ENCODE measurements at regions of chr10 and their contacts with region 1.

Region 1: GRCh38 chr10:72337020-72337629 is 17.6 kb downstream of the DNAJB12 start:
- DNase-seq: peak; percentile 71
- H3K4me3 Mint-ChIP-seq: no peak overlapping the region
- H3K27ac Mint-ChIP-seq: peak overlapping the region; percentile 64
- H3K4me1 Mint-ChIP-seq: peaks cover 66% of the 10 kb centered on the region
- H3K27me3 Mint-ChIP-seq: no peaks in the 10 kb centered on the region

Region 2: DNA sequence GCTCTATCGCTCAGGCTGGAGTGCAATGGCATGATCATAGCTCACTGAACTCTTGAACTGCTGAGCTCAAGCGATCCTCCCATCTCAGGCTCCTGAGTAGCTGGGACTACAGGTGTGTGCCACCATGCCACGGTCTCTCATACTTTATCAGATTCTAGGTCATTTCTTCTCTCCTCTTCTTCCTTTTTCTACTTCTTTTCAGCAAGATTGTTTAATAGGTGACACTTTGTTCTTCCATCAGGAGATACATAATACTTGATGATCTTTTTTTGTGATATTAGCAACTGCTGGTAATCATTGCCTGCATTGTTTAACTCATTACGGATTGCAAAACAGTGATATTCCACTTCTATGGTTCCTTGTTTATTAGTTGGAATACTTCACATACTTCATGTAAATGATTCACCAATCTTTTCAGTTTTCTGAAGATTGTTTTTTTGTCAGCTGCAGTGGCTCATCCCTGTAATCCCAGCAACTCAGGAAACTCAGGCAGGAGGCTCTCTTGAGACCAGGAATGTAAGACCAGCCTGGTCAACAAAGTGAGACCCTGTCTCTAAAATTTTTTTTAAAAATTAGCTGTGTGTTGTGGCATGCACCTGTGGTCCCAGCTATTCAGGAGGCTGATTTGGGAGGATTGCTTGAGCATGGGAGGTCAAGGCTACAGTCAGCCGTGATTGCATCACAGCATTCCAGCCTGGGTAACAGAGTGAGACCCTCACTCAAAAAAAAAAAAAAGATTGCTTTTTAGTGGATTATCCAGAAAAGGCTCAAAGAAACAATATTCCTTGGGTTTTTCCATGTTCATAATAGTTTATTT is 409.1 kb before region 1 on chr10:
- CTCF ChIA-PET with region 1: no interaction called
- POLR2A ChIA-PET with region 1: no interaction called
- DNase-seq: no peak
- H3K4me3 Mint-ChIP-seq: no peak overlapping the region
- H3K27ac Mint-ChIP-seq: no peak overlapping the region
- H3K4me1 Mint-ChIP-seq: no peaks in the 10 kb centered on the region
- H3K27me3 Mint-ChIP-seq: peaks cover 11% of the 10 kb centered on the region

Region 3: GRCh38 chr10:72088889-72089575 is 248.1 kb before region 1 on chr10:
- CTCF ChIA-PET with region 1: interaction called, 17 read pairs
- POLR2A ChIA-PET with region 1: interaction called, 46 read pairs
- DNase-seq: peak; percentile 68
- H3K4me3 Mint-ChIP-seq: peak overlapping the region; percentile 100
- H3K27ac Mint-ChIP-seq: peak overlapping the region; percentile 100
- H3K4me1 Mint-ChIP-seq: peaks cover 54% of the 10 kb centered on the region
- H3K27me3 Mint-ChIP-seq: no peaks in the 10 kb centered on the region

Region 4: GRCh38 chr10:72215652-72216549 is 121.2 kb before region 1 on chr10 and contains the starts of genes ANAPC16 and ASCC1:
- CTCF ChIA-PET with region 1: interaction called, 36 read pairs
- POLR2A ChIA-PET with region 1: interaction called, 29 read pairs
- DNase-seq: peak; percentile 94
- H3K4me3 Mint-ChIP-seq: peak within 1 kb of the TSS; percentile 98
- H3K27ac Mint-ChIP-seq: peak within 1 kb of the TSS; percentile 99
- H3K4me1 Mint-ChIP-seq: peaks cover 61% of the 10 kb centered on the region
- H3K27me3 Mint-ChIP-seq: no peaks in the 10 kb centered on the region
- total RNA-seq, gene ANAPC16: 94.2 to 101 TPM
- total RNA-seq, gene ASCC1: 35.5 to 36.2 TPM

Region 5: DNA sequence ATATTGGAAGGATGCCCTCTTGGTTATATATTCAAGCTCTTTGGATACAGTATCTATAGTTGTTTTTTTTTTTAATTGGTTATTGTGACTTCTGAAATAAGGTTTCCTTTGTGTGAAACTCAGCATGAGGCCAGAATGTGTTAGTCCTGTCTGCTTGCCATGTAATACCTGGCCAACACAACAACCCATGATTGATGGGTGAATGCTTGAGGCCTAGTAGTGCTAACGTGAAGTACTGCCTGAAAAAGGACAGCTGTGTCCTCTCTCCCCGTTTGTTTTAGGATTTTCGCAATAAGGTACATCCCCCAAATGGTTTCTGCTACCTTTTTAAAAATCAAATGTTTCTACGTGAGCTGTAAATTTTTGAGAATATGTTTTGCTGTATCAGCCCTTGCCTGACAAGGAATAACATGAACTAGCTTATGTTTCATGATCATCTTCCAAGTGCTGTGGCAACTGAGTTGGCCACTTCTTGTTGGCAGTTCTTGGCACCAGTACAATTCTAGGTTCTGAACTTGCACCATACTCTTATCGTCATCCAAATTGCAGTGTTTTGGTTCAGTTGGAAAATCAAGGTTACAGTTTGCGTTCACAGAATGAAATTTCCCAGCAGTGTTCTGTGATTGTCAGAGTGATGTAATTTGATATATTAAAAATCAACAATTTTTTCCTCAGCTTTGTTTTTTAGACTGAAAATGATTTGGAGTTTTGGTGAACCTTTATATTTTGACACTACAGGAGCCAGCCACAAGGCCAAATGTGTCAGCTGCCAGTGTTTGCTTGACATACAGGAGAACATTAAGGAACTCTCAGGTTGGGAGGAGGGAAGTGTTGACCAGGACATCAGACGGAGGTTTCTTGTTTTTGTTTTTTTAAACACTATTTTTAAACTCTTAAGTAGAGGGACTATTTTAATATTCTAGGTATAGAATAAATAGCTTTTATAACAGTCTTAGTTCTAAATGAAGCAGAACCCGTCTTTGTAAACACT is 107.6 kb before region 1 on chr10:
- CTCF ChIA-PET with region 1: interaction called, 36 read pairs
- POLR2A ChIA-PET with region 1: interaction called, 6 read pairs
- DNase-seq: no peak
- H3K4me3 Mint-ChIP-seq: no peak overlapping the region
- H3K27ac Mint-ChIP-seq: peak overlapping the region; percentile 27
- H3K4me1 Mint-ChIP-seq: peaks cover 31% of the 10 kb centered on the region
- H3K27me3 Mint-ChIP-seq: no peaks in the 10 kb centered on the region

Region 6: DNA sequence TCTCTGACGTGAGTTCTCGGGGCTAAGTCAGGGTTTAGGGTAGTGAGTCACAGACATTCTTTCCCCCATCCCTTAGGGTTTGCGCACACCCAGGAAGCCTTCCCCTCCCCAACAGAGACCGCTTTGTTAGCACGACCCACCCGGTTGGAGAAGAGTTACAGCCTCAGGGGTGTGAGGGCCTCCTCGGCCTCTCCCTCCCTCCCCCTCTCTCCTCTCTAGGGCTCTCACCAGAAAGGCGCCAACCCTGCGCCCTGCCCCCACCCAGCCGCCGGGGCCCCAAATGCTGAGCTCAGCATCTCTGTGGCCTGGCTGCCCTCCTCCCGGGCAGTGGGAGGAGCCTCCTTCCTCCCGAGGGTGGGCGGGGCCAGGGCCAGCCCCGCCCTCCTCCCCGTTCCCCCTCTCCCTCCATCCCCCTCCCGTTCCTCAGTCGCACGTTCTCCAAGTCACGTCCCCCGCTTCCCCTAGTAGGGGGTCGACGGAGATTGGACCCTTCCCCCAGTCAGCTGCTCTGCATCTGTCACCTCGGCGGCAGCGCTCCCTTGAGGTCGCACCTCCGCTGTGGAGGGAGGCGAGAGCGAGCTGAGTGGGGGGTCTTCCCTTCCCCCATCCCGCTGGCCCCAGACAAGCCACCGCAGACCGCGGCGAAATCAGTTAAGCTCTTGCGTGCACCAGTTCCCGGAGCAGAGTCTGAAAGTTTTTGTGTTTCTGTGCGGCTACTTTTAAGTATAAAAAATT is 76.4 kb before region 1 on chr10:
- CTCF ChIA-PET with region 1: interaction called, 12 read pairs
- POLR2A ChIA-PET with region 1: interaction called, 48 read pairs
- DNase-seq: peak; percentile 95
- H3K4me3 Mint-ChIP-seq: peak overlapping the region; percentile 79
- H3K27ac Mint-ChIP-seq: peak overlapping the region; percentile 98
- H3K4me1 Mint-ChIP-seq: peaks cover 65% of the 10 kb centered on the region
- H3K27me3 Mint-ChIP-seq: no peaks in the 10 kb centered on the region

Region 7: DNA sequence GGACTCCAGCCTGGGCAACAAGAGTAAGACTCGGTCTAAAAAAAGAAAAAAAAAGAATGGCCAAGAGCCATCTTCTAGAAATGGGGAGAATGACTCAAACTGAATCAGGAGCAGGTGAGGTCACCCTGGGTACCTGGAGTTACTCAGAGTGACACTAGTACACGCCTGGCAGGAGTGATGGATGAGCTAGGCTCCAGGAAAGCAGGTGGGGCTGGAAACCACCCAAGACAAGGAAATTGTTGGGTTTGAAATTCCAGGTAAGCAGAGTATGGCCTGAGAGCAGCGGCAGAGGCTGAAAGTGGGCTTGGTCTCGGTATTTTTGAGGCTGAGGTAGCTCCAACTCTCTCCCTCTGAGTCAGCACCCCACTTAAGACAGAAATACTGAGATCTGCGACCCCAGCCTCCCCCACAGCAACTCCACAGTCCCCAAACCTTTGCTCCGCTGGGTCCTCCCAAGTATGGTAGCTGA is 44.9 kb before region 1 on chr10:
- CTCF ChIA-PET with region 1: interaction called, 13 read pairs
- POLR2A ChIA-PET with region 1: interaction called, 64 read pairs
- DNase-seq: peak; percentile 60
- H3K4me3 Mint-ChIP-seq: peak overlapping the region; percentile 31
- H3K27ac Mint-ChIP-seq: peak overlapping the region; percentile 90
- H3K4me1 Mint-ChIP-seq: peaks cover 67% of the 10 kb centered on the region
- H3K27me3 Mint-ChIP-seq: no peaks in the 10 kb centered on the region

Measured in activated CD4-positive, alpha-beta memory T cell treated with anti-CD3 and anti-CD28 coated beads, Interleukin-2, amount 10 ng/mL, durations not matched to agents 7 days and 5 days (primary cell).